ENCODE measurements at regions of chr19 and their contacts with region 1.

Region 1: GRCh38 chr19:15379083-15379995 is at the start of gene AKAP8:
- DNase-seq: peak; percentile 96 to 99
- H3K4me3 ChIP-seq: peak within 1 kb of the TSS; percentile 99 to 100
- H3K27ac ChIP-seq: peak within 1 kb of the TSS; percentile 99 to 100
- H3K4me1 ChIP-seq: peaks cover 19 to 38% of the 10 kb centered on the region in 2 donors
- H3K27me3 ChIP-seq: no peaks in the 10 kb centered on the region
- CTCF ChIP-seq: no peak
- total RNA-seq, gene AKAP8: 17.0 TPM

Region 2: GRCh38 chr19:15177269-15178116 is 201.8 kb before region 1 on chr19:
- intact Hi-C with region 1: loop called (anchors 1 kb)
- DNase-seq: peak in 1 of 2 donors; percentile 89
- H3K4me3 ChIP-seq: peak overlapping the region; percentile 28 to 51
- H3K27ac ChIP-seq: peak overlapping the region; percentile 55 to 72
- H3K4me1 ChIP-seq: no peaks in the 10 kb centered on the region
- H3K27me3 ChIP-seq: no peaks in the 10 kb centered on the region
- CTCF ChIP-seq: peak; percentile 95 to 99 (median 95)

Region 3: GRCh38 chr19:15264061-15264932 is 115.0 kb before region 1 on chr19:
- intact Hi-C with region 1: loop called (anchors 1 kb)
- DNase-seq: peak in 1 of 2 donors; percentile 89
- H3K4me3 ChIP-seq: no peak overlapping the region
- H3K27ac ChIP-seq: peak overlapping the region; percentile 69 to 83
- H3K4me1 ChIP-seq: peaks cover 19 to 40% of the 10 kb centered on the region in 2 donors
- H3K27me3 ChIP-seq: no peaks in the 10 kb centered on the region
- CTCF ChIP-seq: peak; percentile 78 to 87 (median 78)

Region 4: GRCh38 chr19:15418588-15419412 is 39.5 kb after region 1 on chr19 and contains the start of gene AKAP8L:
- intact Hi-C with region 1: loop called (anchors 1 kb)
- DNase-seq: peak; percentile 99 to 100
- H3K4me3 ChIP-seq: peak within 1 kb of the TSS; percentile 88 to 97
- H3K27ac ChIP-seq: peak within 1 kb of the TSS; percentile 87 to 88
- H3K4me1 ChIP-seq: peaks cover 5 to 35% of the 10 kb centered on the region in 2 donors
- H3K27me3 ChIP-seq: no peaks in the 10 kb centered on the region
- CTCF ChIP-seq: peak; percentile 25 to 60 (median 45)
- total RNA-seq, gene AKAP8L: 143 TPM

Region 5: DNA sequence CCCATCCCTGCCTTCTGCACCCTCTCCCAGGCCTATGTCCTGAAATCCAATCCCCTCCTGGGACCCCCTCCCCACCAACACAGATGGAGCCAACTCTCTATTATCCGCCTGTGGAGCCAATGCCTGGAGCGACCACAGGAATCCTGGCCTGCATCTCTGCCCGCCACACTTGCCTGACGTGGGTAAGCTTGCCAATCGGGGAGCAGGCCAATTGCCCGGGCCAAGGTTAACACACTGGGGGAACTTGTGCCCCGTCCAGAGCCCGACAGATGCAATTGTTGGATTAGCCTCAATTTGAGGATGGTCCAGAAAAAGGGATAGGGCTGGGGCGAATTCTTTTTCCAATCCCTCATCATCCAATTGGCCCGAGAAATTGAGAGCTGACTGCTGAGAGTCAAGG is 64.5 kb after region 1 on chr19:
- intact Hi-C with region 1: loop called (anchors 2 kb)
- DNase-seq: peak; percentile 41 to 84
- H3K4me3 ChIP-seq: peak overlapping the region in 1 of 2 donors; percentile 12
- H3K27ac ChIP-seq: peak overlapping the region; percentile 73 to 86
- H3K4me1 ChIP-seq: peaks cover 17 to 48% of the 10 kb centered on the region in 2 donors
- H3K27me3 ChIP-seq: no peaks in the 10 kb centered on the region
- CTCF ChIP-seq: no peak